Mammary epithelial cell (primary cell): ENCODE measurements at regions of chr3 and their contacts with region 1.

Region 1: DNA sequence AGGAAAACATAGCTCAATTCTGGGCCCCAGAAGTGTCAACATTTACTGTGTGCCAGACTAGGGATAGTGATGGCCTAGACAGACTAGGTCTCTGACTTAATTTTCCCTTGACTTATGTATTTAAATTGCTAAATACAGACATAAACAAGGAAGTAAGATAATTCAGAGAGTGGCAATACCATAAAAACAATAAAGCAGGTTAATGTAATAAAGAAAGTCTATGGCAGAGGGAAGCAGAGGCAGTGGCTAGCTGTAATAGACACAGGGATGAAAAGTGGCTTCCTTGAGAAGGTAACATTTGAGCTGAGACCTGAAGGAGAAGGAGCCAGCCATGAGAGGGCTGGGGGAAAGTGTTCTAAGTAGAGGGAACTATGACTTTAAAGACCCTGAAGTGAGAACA is 95.7 kb downstream of the TNIK start:
- DNase-seq: no peak
- H3K4me3 ChIP-seq: no peak overlapping the region
- H3K27ac ChIP-seq: no peak overlapping the region
- H3K4me1 ChIP-seq: no peaks in the 10 kb centered on the region
- H3K27me3 ChIP-seq: no peaks in the 10 kb centered on the region
- CTCF ChIP-seq: no peak

Region 2: GRCh38 chr3:171339598-171339997 is 24.9 kb before region 1 on chr3:
- CTCF ChIA-PET with region 1: interaction called, 14 read pairs
- dilution Hi-C with region 1: no loop called
- in situ Hi-C with region 1: no loop called
- intact Hi-C with region 1: no loop called
- DNase-seq: no peak
- H3K4me3 ChIP-seq: no peak overlapping the region
- H3K27ac ChIP-seq: no peak overlapping the region
- H3K4me1 ChIP-seq: no peaks in the 10 kb centered on the region
- H3K27me3 ChIP-seq: no peaks in the 10 kb centered on the region
- CTCF ChIP-seq: no peak